Activated B cell treated with CpG ODN at 0.5 μM for 24 hours (primary cell): ENCODE measurements at regions of chr2 and their contacts with region 1.

Region 1: GRCh38 chr2:112054847-112055729 is at the start of gene TMEM87B:
- DNase-seq: peak; percentile 87
- ATAC-seq: peak; percentile 72
- H3K4me3 Mint-ChIP-seq: peak within 1 kb of the TSS; percentile 96
- H3K27ac Mint-ChIP-seq: peak within 1 kb of the TSS; percentile 97
- H3K4me1 Mint-ChIP-seq: peaks cover 39% of the 10 kb centered on the region
- H3K27me3 Mint-ChIP-seq: no peaks in the 10 kb centered on the region
- CTCF ChIP-seq: no peak
- total RNA-seq, gene TMEM87B: 19.8 and 20.0 TPM in 2 replicates

Region 2: GRCh38 chr2:111883661-111884591 is 171.2 kb before region 1 on chr2 and contains the start of gene ANAPC1:
- CTCF ChIA-PET with region 1: interaction called, 25 read pairs
- POLR2A ChIA-PET with region 1: interaction called, 33 read pairs
- intact Hi-C with region 1: loop called (anchors 1 kb)
- DNase-seq: peak; percentile 79
- ATAC-seq: peak; percentile 91
- H3K4me3 Mint-ChIP-seq: peak within 1 kb of the TSS; percentile 92
- H3K27ac Mint-ChIP-seq: peak within 1 kb of the TSS; percentile 94
- H3K4me1 Mint-ChIP-seq: peaks cover 11% of the 10 kb centered on the region
- H3K27me3 Mint-ChIP-seq: no peaks in the 10 kb centered on the region
- CTCF ChIP-seq: no peak
- total RNA-seq, gene ANAPC1: 74.0 and 88.1 TPM in 2 replicates

Region 3: DNA sequence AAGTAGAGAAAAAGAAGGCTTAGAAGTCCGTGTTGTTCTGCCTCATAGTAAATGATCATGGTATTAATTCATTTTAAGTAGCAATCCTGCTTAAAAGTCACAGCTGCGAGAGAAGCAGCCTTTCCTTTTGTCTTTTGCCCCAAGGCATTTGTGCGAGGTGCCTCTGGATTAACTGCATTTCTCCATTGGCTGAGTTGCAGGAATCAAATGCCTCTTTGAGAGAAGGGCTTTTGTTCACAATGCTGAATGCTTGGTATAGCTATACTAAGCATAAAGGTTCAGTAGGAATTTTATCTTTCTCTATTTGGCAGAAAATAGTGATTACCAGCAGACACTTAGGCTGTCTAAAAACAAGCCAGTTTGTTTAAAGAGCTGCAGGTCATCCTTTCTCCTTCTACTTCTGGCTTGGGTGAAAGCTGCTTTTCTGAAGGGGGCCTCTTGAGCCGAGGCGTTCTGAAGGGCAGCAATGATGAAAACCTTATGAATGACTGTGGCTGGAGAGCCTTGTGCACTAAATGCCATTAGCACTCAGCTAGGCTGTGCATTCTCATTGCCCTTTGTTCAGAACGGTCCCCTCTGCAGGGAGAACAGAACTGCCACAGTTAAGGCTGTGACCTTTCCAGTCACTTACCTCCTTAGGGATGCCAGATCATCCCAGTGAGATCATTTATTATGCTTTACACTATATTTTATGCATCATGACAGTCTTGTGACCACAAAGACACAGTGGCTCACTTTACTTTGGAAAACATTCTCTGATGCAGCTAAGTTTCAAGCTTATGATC is 68.8 kb before region 1 on chr2:
- CTCF ChIA-PET with region 1: no interaction called
- POLR2A ChIA-PET with region 1: no interaction called
- intact Hi-C with region 1: no loop called
- DNase-seq: no peak
- ATAC-seq: no peak
- H3K4me3 Mint-ChIP-seq: no peak overlapping the region
- H3K27ac Mint-ChIP-seq: no peak overlapping the region
- H3K4me1 Mint-ChIP-seq: no peaks in the 10 kb centered on the region
- H3K27me3 Mint-ChIP-seq: peaks cover 8% of the 10 kb centered on the region
- CTCF ChIP-seq: no peak

Region 4: DNA sequence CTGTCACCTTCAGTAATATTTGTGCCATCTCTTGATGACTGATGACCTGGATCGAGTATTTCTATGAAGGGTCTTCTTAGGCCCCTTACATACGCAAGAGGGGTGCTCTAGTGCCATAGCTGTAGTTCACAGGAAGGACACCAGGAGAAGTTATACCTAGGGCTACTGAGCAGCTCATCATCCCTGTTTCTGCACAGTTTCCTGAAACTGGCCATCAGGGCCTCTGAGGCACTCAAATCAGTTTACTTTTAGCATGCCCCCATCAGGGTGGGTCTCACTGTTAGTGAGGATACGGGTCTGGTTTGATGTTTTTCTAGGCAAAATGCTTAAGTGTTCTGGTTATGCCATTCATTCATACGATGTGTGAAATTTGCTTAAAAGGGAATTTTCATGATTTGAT is 63.1 kb after region 1 on chr2:
- CTCF ChIA-PET with region 1: no interaction called
- POLR2A ChIA-PET with region 1: no interaction called
- intact Hi-C with region 1: no loop called
- DNase-seq: no peak
- ATAC-seq: no peak
- H3K4me3 Mint-ChIP-seq: no peak overlapping the region
- H3K27ac Mint-ChIP-seq: no peak overlapping the region
- H3K4me1 Mint-ChIP-seq: peaks cover 1% of the 10 kb centered on the region
- H3K27me3 Mint-ChIP-seq: no peaks in the 10 kb centered on the region
- CTCF ChIP-seq: no peak

Region 5: DNA sequence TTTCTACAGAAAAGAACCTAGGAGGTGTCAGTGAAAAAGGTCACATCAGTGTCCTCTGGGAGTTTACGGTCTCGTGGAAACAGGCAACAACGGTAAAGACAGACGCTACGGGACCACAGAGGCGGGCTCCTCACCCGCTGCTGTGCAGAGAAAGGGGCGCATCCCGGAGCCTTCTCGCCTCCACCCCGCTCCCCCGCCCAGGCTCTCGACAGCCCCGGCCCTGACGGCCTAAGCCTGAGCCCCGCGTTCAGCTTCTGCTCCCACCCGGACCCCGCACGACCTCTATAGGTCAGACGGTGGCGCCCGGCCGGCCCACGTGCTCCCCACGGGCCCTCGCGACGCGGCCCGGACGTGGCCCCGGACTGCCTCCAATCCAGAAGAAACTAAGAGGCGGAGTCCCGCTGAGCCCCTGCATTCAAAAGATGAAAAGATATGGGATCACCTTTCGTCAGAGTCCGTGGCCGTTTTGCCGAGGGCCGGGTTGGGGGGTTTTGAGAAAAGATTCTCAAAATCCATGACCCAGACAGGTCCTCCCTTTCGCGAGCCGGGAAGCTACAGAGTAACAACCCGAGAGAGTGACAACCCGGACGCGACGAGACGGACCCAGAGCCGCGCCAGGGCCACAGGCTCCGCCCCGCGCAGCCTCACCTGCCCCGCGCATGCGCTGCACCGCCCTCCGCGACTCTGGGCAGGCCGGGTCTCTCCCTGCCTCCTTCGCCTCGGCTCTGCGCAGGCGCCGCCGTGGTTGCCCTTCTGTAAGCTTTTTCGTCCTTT is 199.6 kb after region 1 on chr2 and contains the start of gene ZC3H8:
- CTCF ChIA-PET with region 1: no interaction called
- POLR2A ChIA-PET with region 1: interaction called, 13 read pairs
- intact Hi-C with region 1: loop called (anchors 1 kb)
- DNase-seq: peak; percentile 96
- ATAC-seq: peak; percentile 91
- H3K4me3 Mint-ChIP-seq: peak within 1 kb of the TSS; percentile 90
- H3K27ac Mint-ChIP-seq: peak within 1 kb of the TSS; percentile 95
- H3K4me1 Mint-ChIP-seq: peaks cover 11% of the 10 kb centered on the region
- H3K27me3 Mint-ChIP-seq: no peaks in the 10 kb centered on the region
- CTCF ChIP-seq: no peak
- total RNA-seq, gene ZC3H8: 17.2 and 25.7 TPM in 2 replicates

Region 6: GRCh38 chr2:112454586-112454985 is 399.5 kb after region 1 on chr2:
- CTCF ChIA-PET with region 1: no interaction called
- POLR2A ChIA-PET with region 1: no interaction called
- intact Hi-C with region 1: no loop called
- DNase-seq: no peak
- ATAC-seq: no peak
- H3K4me3 Mint-ChIP-seq: no peak overlapping the region
- H3K27ac Mint-ChIP-seq: no peak overlapping the region
- H3K4me1 Mint-ChIP-seq: no peaks in the 10 kb centered on the region
- H3K27me3 Mint-ChIP-seq: peaks cover 7% of the 10 kb centered on the region
- CTCF ChIP-seq: no peak

Region 7: GRCh38 chr2:112481050-112481527 is 426.0 kb after region 1 on chr2:
- CTCF ChIA-PET with region 1: no interaction called
- POLR2A ChIA-PET with region 1: interaction called, 3 read pairs
- intact Hi-C with region 1: loop called (anchors 2 kb)
- DNase-seq: peak; percentile 71
- ATAC-seq: peak; percentile 73
- H3K4me3 Mint-ChIP-seq: peak overlapping the region; percentile 98
- H3K27ac Mint-ChIP-seq: peak overlapping the region; percentile 97
- H3K4me1 Mint-ChIP-seq: peaks cover 22% of the 10 kb centered on the region
- H3K27me3 Mint-ChIP-seq: no peaks in the 10 kb centered on the region
- CTCF ChIP-seq: no peak

Region 8: DNA sequence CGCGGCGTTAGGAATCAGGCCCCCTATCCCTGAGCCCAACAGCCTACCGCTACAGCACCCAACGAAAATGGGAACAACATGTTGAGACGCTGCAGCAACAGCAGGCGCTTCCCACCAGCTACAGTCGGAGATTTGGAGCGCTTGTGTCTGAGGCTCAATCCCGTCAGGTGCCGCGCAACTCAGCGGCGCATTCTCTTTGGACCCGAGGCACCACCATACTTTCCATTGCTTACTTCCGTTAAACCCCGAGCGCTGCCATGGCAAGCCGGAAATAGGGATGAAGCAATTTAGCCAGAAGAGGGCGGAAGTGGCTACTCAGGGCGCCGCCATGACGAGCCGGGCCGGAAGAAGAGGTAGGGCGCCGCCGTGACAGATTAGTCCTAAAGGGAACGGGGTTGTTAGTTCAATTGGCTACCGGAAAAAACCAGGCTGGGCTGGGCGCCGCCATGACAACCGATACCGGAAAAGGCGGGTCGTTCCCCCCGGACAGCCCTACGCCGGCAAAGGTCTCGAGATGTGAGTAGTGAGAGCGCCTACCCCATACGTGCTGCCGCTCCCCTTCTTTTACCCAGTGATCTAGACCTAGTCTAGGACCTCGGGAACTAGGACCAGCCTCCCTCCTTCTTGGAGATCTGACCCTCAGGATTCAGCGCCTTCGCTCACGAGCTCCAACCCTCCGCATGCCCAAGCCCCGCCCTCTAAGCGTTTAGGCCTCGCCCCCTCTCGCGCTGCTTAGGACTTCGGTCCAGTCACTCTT is 529.2 kb after region 1 on chr2 and contains the start of gene CHCHD5:
- CTCF ChIA-PET with region 1: no interaction called
- POLR2A ChIA-PET with region 1: no interaction called
- intact Hi-C with region 1: loop called (anchors 1 kb)
- DNase-seq: peak; percentile 84
- ATAC-seq: peak; percentile 85
- H3K4me3 Mint-ChIP-seq: peak within 1 kb of the TSS; percentile 96
- H3K27ac Mint-ChIP-seq: peak within 1 kb of the TSS; percentile 96
- H3K4me1 Mint-ChIP-seq: peaks cover 35% of the 10 kb centered on the region
- H3K27me3 Mint-ChIP-seq: no peaks in the 10 kb centered on the region
- CTCF ChIP-seq: no peak
- total RNA-seq, gene CHCHD5: 26.0 and 28.4 TPM in 2 replicates

Region 9: DNA sequence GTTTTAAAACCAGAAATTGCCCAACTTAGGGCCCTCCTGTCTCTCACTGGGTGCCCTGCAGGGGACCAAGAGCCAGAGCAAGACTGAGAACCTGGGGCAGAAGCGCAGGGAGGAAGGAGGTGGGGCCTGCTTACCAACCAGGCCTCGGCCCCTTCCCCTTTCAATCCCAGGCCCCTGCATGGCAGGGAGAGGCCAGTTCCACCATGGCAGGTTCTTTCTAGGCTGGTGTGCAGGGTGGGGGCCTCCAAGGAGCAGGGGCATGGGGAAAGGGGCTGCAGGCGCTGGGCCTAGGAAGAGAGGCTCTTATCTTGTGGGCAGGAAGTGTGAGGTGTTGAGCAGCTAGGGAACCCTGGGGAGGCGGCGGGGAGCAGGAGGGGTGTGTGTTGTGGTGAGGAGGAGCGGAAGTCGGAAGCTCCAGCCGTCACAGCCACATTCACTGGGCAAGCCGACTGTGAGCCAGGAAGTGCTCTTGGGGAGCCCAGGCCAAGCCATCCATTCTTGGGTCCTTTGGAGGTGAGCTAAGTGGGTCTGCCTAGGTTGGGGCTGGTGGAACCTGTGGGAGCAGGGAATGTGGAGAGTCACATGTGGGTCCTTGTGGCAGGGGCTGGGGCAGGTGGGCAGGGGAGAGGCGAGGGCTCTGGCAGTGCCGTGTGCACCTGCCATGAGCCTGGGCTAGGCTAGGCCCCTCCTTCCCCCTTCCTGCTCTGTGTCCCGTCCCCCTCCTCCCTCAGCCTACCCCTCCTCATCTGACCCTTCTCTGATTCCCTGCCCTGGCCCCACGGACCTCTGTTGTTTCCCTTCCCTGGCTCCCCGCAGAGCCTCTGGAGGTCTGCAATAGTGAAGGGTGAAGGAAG is 1118.7 kb after region 1 on chr2 and contains the start of gene PSD4:
- CTCF ChIA-PET with region 1: no interaction called
- POLR2A ChIA-PET with region 1: interaction called, 3 read pairs
- intact Hi-C with region 1: loop called (anchors 10 kb)
- DNase-seq: peak; percentile 69
- ATAC-seq: peak; percentile 75
- H3K4me3 Mint-ChIP-seq: peak within 1 kb of the TSS; percentile 87
- H3K27ac Mint-ChIP-seq: peak within 1 kb of the TSS; percentile 91
- H3K4me1 Mint-ChIP-seq: peaks cover 85% of the 10 kb centered on the region
- H3K27me3 Mint-ChIP-seq: peaks cover 2% of the 10 kb centered on the region
- CTCF ChIP-seq: no peak
- total RNA-seq, gene PSD4: 161 and 182 TPM in 2 replicates